AG04449 (cell line): ENCODE measurements at regions of chr1 and their contacts with region 1.

Region 1: DNA sequence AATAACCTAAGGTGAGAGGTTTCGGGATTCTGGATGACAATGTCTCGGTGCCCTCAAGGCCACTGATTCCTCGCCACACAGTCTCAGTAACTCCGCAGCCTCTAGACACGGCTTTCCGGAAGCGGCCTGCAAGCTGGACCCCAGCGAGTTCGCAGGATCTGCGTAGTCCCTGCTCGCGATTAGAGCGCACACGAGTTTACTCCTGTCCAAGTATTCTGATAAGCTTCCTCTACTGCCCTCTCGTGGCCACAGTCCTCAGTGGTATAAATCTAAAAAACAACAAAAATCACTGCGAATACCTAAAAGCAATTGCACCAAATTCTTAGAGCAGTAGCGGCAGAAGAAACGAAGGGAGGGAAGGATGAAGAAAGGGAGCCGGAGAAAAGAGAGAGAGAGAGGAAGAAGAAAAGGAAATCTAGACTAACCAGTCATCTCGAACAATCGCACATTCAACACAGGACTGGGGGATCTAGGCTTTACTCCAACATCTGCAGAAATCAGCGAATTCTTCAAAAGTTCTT is 1.1 kb upstream of the PLXNA2 start:
- DNase-seq: peak; percentile 59
- H3K4me3 ChIP-seq: peak overlapping the region; percentile 44
- CTCF ChIP-seq: peak; percentile 60

Region 2: GRCh38 chr1:207279652-207280051 is 965.6 kb before region 1 on chr1:
- CTCF ChIA-PET with region 1: no interaction called
- POLR2A ChIA-PET with region 1: no interaction called
- DNase-seq: no peak
- H3K4me3 ChIP-seq: no peak overlapping the region
- CTCF ChIP-seq: no peak

Region 3: GRCh38 chr1:207997486-207998268 is 247.6 kb before region 1 on chr1:
- CTCF ChIA-PET with region 1: interaction called, 24 read pairs
- POLR2A ChIA-PET with region 1: no interaction called
- DNase-seq: no peak
- H3K4me3 ChIP-seq: no peak overlapping the region
- CTCF ChIP-seq: peak; percentile 90

Region 4: GRCh38 chr1:208047476-208047934 is 197.7 kb before region 1 on chr1:
- CTCF ChIA-PET with region 1: interaction called, 25 read pairs
- POLR2A ChIA-PET with region 1: no interaction called
- DNase-seq: no peak
- H3K4me3 ChIP-seq: no peak overlapping the region
- CTCF ChIP-seq: no peak

Region 5: DNA sequence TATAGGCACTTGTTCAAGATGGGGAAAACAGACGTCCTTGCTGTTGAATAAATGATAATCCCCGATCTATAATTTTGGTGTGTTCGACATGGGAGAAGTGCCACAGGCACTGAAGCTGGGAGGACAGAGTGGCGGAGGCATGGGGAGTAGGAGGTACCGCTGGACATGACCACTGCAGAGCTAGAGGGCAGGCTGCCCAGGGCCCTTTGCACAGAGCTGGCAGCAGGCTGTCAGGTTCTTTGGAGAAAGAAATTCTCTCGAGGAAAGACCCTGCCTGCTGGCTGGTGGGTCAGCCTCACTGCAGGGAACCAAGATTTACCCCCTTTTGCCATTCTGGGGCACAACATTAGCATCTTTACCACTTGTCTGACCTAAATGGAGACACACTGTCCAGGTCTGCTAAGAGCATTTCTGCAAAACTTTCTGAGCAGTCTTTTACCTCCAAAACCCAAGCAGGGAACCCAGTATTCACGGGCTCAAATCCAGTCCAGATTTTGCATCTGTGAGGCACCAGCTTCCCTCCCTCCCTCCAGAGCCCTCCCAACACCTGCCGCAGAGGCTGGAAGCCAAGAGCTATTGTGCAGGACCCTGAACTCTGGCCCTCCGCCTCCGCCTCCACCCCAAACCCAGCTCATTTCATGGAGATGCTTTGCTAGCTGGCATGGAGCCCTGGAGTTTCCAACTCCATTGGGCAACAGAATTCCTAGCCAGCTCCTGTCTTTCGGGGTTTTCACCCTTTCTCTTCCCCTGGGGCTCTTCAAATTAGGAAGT is 143.4 kb before region 1 on chr1:
- CTCF ChIA-PET with region 1: interaction called, 186 read pairs
- POLR2A ChIA-PET with region 1: no interaction called
- DNase-seq: no peak
- H3K4me3 ChIP-seq: no peak overlapping the region
- CTCF ChIP-seq: no peak

Region 6: DNA sequence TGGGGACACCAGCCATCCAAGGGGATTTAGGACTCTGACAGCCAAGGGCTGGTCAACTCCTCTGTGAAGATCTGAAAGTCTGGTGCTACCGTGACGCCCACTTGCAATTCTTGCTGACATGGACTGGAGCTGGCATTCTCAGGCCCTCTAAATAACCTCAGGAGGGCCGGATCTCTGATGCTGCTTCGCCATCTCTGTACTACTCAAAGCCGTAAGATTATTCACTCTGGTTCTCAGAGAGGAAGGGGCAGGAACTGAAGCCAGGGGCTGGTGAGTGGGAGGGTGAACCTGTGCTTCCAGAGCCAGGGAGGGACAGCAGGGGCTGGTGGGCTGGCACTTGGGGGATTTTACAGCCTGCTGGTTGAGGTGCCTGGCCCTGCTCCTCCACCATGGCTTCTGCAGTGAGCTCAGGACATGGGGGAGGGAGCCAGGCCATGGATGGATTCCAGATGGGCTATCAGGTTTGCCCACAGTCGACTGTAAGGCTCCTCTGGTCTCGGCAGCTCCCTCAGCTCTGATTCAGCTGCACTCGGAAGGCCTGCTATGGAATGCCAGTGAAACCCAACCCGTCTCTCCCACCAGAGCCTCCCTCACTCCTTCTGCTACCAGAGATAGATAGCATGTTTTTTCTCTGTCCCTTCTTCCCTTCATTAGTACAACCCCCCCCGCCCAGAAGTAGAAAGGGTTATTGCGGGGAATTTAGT is 85.5 kb before region 1 on chr1:
- CTCF ChIA-PET with region 1: interaction called, 37 read pairs
- POLR2A ChIA-PET with region 1: no interaction called
- DNase-seq: peak; percentile 65
- H3K4me3 ChIP-seq: no peak overlapping the region
- CTCF ChIP-seq: no peak